ENCODE measurements at regions of chr5 and their contacts with region 1.

Region 1: DNA sequence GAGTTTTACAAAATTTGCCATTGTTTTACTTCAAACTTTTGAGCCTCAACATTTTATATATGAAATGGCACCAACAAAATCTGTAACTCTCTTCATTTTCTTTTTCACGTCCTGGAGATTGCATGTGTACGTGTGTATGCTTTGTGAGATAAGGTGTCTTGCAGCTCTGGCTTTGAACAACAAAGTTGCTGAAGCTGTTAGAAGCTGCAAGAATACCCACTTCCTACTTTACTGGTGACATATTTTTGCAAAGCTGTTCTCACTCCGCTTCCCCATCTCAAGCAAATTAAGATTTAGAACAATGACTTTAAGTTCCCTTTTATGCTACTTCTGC is 41.8 kb downstream of the FYB1 start:
- DNase-seq: peak in 13 of 35 experiments; percentile 38 to 80 (median 51)
- ATAC-seq: peak; percentile 73 to 78 (median 76)
- H3K4me3 ChIP-seq: peak overlapping the region in 1 of 2 donors; percentile 17
- H3K4me3 Mint-ChIP-seq: peak overlapping the region; percentile 56 to 70 (median 67)
- H3K27ac ChIP-seq: peak overlapping the region; percentile 72
- H3K27ac Mint-ChIP-seq: peak overlapping the region; percentile 97 to 98
- H3K4me1 ChIP-seq: peaks cover 58 to 84% of the 10 kb centered on the region in 2 experiments
- H3K4me1 Mint-ChIP-seq: peaks cover 98 to 100% (median 98%) of the 10 kb centered on the region in 3 donors
- H3K27me3 ChIP-seq: no peaks in the 10 kb centered on the region
- H3K27me3 Mint-ChIP-seq: no peaks in the 10 kb centered on the region

Region 2: GRCh38 chr5:38316544-38317224 is 860.9 kb before region 1 on chr5:
- CTCF ChIA-PET with region 1: no interaction called
- POLR2A ChIA-PET with region 1: no interaction called
- DNase-seq: no peak
- ATAC-seq: no peak
- H3K4me3 ChIP-seq: no peak overlapping the region
- H3K4me3 Mint-ChIP-seq: no peak overlapping the region
- H3K27ac ChIP-seq: no peak overlapping the region
- H3K27ac Mint-ChIP-seq: no peak overlapping the region
- H3K4me1 ChIP-seq: no peaks in the 10 kb centered on the region
- H3K4me1 Mint-ChIP-seq: no peaks in the 10 kb centered on the region
- H3K27me3 ChIP-seq: no peaks in the 10 kb centered on the region
- H3K27me3 Mint-ChIP-seq: peaks cover 3 to 9% of the 10 kb centered on the region in 2 donors

Region 3: GRCh38 chr5:39187831-39188731 is 10.5 kb after region 1 on chr5:
- CTCF ChIA-PET with region 1: interaction called, 6 to 31 read pairs
- POLR2A ChIA-PET with region 1: interaction called, 6 read pairs
- DNase-seq: peak in 8 of 35 experiments; percentile 29 to 68 (median 41)
- ATAC-seq: peak; percentile 19 to 36 (median 28)
- H3K4me3 ChIP-seq: peak overlapping the region; percentile 26 to 46
- H3K4me3 Mint-ChIP-seq: peak overlapping the region; percentile 79 to 95 (median 84)
- H3K27ac ChIP-seq: peak overlapping the region; percentile 72
- H3K27ac Mint-ChIP-seq: peak overlapping the region; percentile 96 to 100
- H3K4me1 ChIP-seq: peaks cover 57 to 77% of the 10 kb centered on the region in 2 experiments
- H3K4me1 Mint-ChIP-seq: peaks cover 91 to 95% (median 91%) of the 10 kb centered on the region in 3 donors
- H3K27me3 ChIP-seq: no peaks in the 10 kb centered on the region
- H3K27me3 Mint-ChIP-seq: no peaks in the 10 kb centered on the region

Region 4: GRCh38 chr5:39194466-39195136 is 17.0 kb after region 1 on chr5:
- CTCF ChIA-PET with region 1: interaction called, 6 to 31 read pairs
- POLR2A ChIA-PET with region 1: interaction called, 7 to 8 read pairs
- DNase-seq: no peak
- ATAC-seq: no peak
- H3K4me3 ChIP-seq: peak overlapping the region; percentile 74 to 78
- H3K4me3 Mint-ChIP-seq: peak overlapping the region; percentile 74 to 95 (median 74)
- H3K27ac ChIP-seq: peak overlapping the region; percentile 72
- H3K27ac Mint-ChIP-seq: peak overlapping the region; percentile 94 to 98
- H3K4me1 ChIP-seq: peaks cover 48 to 65% of the 10 kb centered on the region in 2 experiments
- H3K4me1 Mint-ChIP-seq: peaks cover 72 to 76% (median 75%) of the 10 kb centered on the region in 3 donors
- H3K27me3 ChIP-seq: no peaks in the 10 kb centered on the region
- H3K27me3 Mint-ChIP-seq: no peaks in the 10 kb centered on the region

Measured in T-cell (primary cell).